ENCODE measurements at regions of chr18 and their contacts with region 1.

Region 1: DNA sequence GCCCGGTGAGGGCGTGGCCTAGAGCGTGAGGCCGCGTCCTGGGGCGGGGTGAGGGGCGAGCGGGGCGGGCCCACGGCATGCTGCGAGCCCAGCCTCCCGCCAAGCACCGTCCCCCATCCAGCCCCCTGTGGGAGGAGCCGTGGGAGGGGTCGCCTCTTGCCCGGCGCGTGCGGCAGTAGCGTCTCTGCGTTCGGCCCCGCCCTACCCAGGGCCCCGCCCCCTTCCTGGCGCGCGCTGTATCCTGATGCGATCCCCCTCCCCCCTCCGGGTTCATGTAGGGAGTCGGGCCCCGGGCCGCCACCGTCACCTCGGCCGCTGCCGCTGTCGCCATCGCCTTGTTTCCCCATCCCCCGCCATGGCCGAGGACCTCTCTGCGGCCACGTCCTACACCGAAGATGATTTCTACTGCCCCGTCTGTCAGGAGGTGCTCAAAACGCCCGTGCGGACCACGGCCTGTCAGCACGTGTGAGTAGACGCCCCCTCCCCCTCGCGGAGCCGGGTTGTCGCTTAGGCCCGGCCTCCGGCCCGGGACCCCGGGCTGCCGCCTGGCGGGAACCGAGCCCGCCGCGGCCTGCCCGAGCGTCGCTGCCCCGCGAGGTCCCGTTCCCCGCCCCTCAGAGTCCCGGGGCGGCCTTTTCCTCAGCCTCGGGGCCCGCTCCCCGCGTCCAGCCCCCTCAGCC is 888 bp downstream of the RNF138 start:
- DNase-seq: peak; percentile 99
- H3K4me3 Mint-ChIP-seq: peak overlapping the region; percentile 97
- H3K27ac Mint-ChIP-seq: peak overlapping the region; percentile 98
- H3K4me1 Mint-ChIP-seq: peaks cover 42% of the 10 kb centered on the region
- H3K27me3 Mint-ChIP-seq: no peaks in the 10 kb centered on the region

Region 2: GRCh38 chr18:31658670-31659575 is 433.6 kb before region 1 on chr18:
- CTCF ChIA-PET with region 1: no interaction called
- intact Hi-C with region 1: loop called (anchors 2 kb)
- DNase-seq: peak; percentile 38
- H3K4me3 Mint-ChIP-seq: no peak overlapping the region
- H3K27ac Mint-ChIP-seq: peak overlapping the region; percentile 34
- H3K4me1 Mint-ChIP-seq: peaks cover 22% of the 10 kb centered on the region
- H3K27me3 Mint-ChIP-seq: peaks cover under 1% of the 10 kb centered on the region

Region 3: GRCh38 chr18:32048507-32049091 is 44.0 kb before region 1 on chr18:
- CTCF ChIA-PET with region 1: no interaction called
- intact Hi-C with region 1: loop called (anchors 1 kb)
- DNase-seq: peak; percentile 30
- H3K4me3 Mint-ChIP-seq: no peak overlapping the region
- H3K27ac Mint-ChIP-seq: peak overlapping the region; percentile 81
- H3K4me1 Mint-ChIP-seq: peaks cover 23% of the 10 kb centered on the region
- H3K27me3 Mint-ChIP-seq: no peaks in the 10 kb centered on the region

Region 4: DNA sequence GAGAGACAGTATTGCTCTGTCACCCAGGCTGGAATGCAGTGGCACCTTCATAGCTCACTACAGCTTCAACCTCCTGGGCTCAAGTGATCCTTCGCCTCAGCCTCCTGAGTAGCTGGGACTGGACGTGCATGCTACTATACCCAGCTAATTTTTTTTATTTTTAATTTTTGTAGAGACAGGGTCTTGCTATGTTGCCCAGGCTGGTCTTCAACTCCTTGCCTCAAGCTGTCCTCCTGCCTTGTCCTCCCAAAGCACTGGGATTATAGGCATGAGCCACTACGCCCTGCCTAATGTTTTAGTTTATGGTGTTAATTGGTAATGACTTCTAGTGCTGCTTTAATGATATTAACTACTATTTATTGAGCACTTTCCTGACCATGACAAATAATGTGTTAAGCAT is 17.4 kb after region 1 on chr18:
- CTCF ChIA-PET with region 1: no interaction called
- intact Hi-C with region 1: loop called (anchors 2 kb)
- DNase-seq: no peak
- H3K4me3 Mint-ChIP-seq: no peak overlapping the region
- H3K27ac Mint-ChIP-seq: no peak overlapping the region
- H3K4me1 Mint-ChIP-seq: peaks cover 54% of the 10 kb centered on the region
- H3K27me3 Mint-ChIP-seq: no peaks in the 10 kb centered on the region

Region 5: DNA sequence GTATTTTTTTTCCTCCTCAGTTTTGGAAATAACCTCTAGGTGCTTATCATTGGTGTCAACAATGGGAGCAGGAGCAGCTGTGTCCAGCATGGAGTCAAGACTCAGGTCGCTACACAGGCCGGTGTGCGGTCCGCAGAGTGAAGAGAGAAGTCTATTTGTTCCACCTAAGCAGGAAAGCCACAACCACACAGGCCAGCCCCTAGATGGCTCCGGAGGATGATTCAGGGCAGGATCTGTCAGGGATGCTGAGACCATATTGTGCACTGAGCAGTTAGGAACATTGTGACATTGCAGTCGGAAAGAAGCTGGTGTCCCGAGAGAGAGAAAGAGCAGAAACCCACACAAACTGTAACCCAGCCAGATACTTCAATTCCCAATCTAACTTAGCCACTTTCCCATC is 241.2 kb after region 1 on chr18:
- CTCF ChIA-PET with region 1: no interaction called
- intact Hi-C with region 1: no loop called
- DNase-seq: no peak
- H3K4me3 Mint-ChIP-seq: no peak overlapping the region
- H3K27ac Mint-ChIP-seq: no peak overlapping the region
- H3K4me1 Mint-ChIP-seq: no peaks in the 10 kb centered on the region
- H3K27me3 Mint-ChIP-seq: peaks cover 9% of the 10 kb centered on the region

Region 6: GRCh38 chr18:32530947-32531651 is 438.5 kb after region 1 on chr18:
- CTCF ChIA-PET with region 1: no interaction called
- intact Hi-C with region 1: loop called (anchors 5 kb)
- DNase-seq: peak; percentile 40
- H3K4me3 Mint-ChIP-seq: no peak overlapping the region
- H3K27ac Mint-ChIP-seq: peak overlapping the region; percentile 9
- H3K4me1 Mint-ChIP-seq: peaks cover 17% of the 10 kb centered on the region
- H3K27me3 Mint-ChIP-seq: peaks cover 13% of the 10 kb centered on the region